Ovary (tissue), 10 donors: ENCODE measurements at regions of chr1 and their contacts with region 1.

Region 1: GRCh38 chr1:202471246-202471645 is 122.7 kb downstream of the PPP1R12B start:
- DNase-seq: no peak
- H3K4me3 ChIP-seq: no peak overlapping the region
- H3K27ac ChIP-seq: no peak overlapping the region
- H3K4me1 ChIP-seq: no peaks in the 10 kb centered on the region
- H3K27me3 ChIP-seq: no peaks in the 10 kb centered on the region
- CTCF ChIP-seq: no peak
- EP300 ChIP-seq: no peak
- POLR2A ChIP-seq: no peak

Region 2: GRCh38 chr1:201538612-201539551 is 932.4 kb before region 1 on chr1 and contains the start of gene NAV1:
- intact Hi-C with region 1: loop called in 1 of 4 experiments (anchors 10 kb)
- DNase-seq: peak; percentile 26 to 63 (median 55)
- H3K4me3 ChIP-seq: peak within 1 kb of the TSS; percentile 47
- H3K27ac ChIP-seq: peak within 1 kb of the TSS in 1 of 2 donors; percentile 63
- H3K4me1 ChIP-seq: peaks cover 5% of the 10 kb centered on the region
- H3K27me3 ChIP-seq: no peaks in the 10 kb centered on the region
- CTCF ChIP-seq: no peak
- EP300 ChIP-seq: no peak
- POLR2A ChIP-seq: peak; percentile 37
- total RNA-seq, gene NAV1: 6.2 to 19.6 (median 11.3) TPM

Region 3: DNA sequence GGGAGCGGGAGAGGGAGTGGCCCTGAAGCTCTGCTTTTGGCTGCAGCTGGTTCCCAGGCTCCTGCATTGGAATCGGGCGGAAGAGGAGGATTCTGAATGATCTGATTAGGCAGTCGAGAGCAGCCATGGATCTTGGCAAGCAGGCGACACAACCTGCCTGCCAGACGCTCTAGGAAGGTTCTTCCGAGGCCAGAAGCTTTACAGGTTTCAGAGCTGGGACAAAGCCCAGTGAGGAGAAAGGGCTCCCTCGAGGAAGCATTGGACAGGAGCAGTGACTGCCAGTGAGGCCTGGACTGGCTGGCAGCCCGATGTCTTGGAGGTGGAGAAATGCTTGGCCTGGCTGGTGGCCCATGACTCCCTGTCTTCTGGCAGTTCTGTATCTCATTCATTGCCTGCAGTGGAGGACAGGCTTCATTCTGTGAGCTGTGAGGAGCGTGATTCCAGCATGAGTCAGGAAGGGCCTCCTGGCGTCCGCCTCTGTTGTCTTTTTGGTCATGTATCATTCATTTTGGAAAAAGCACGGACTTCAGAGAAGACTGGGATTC is 775.0 kb before region 1 on chr1:
- intact Hi-C with region 1: no loop called
- DNase-seq: peak; percentile 42 to 76 (median 65)
- H3K4me3 ChIP-seq: no peak overlapping the region
- H3K27ac ChIP-seq: no peak overlapping the region
- H3K4me1 ChIP-seq: peaks cover 2% of the 10 kb centered on the region
- H3K27me3 ChIP-seq: no peaks in the 10 kb centered on the region
- CTCF ChIP-seq: no peak
- EP300 ChIP-seq: no peak
- POLR2A ChIP-seq: no peak